B cell (primary cell): ENCODE measurements at regions of chr12 and their contacts with region 1.

Region 1: GRCh38 chr12:47032644-47033043 is 46.8 kb upstream of the PCED1B start:
- DNase-seq: peak; percentile 78
- ATAC-seq: peak; percentile 81
- H3K4me3 ChIP-seq: no peak overlapping the region
- H3K4me3 Mint-ChIP-seq: no peak overlapping the region
- H3K27ac ChIP-seq: no peak overlapping the region
- H3K27ac Mint-ChIP-seq: no peak overlapping the region
- H3K4me1 ChIP-seq: peaks cover 0 to 3% of the 10 kb centered on the region in 2 donors
- H3K4me1 Mint-ChIP-seq: peaks cover 8% of the 10 kb centered on the region
- H3K27me3 ChIP-seq: no peaks in the 10 kb centered on the region
- H3K27me3 Mint-ChIP-seq: no peaks in the 10 kb centered on the region
- CTCF ChIP-seq: peak; percentile 77

Region 2: GRCh38 chr12:46874642-46875041 is 158.0 kb before region 1 on chr12:
- CTCF ChIA-PET with region 1: no interaction called
- POLR2A ChIA-PET with region 1: no interaction called
- intact Hi-C with region 1: no loop called
- DNase-seq: no peak
- ATAC-seq: no peak
- H3K4me3 ChIP-seq: no peak overlapping the region
- H3K4me3 Mint-ChIP-seq: no peak overlapping the region
- H3K27ac ChIP-seq: no peak overlapping the region
- H3K27ac Mint-ChIP-seq: no peak overlapping the region
- H3K4me1 ChIP-seq: no peaks in the 10 kb centered on the region
- H3K4me1 Mint-ChIP-seq: no peaks in the 10 kb centered on the region
- H3K27me3 ChIP-seq: peaks cover 0 to 3% (median 0%) of the 10 kb centered on the region in 4 experiments
- H3K27me3 Mint-ChIP-seq: peaks cover 37% of the 10 kb centered on the region
- CTCF ChIP-seq: no peak

Region 3: DNA sequence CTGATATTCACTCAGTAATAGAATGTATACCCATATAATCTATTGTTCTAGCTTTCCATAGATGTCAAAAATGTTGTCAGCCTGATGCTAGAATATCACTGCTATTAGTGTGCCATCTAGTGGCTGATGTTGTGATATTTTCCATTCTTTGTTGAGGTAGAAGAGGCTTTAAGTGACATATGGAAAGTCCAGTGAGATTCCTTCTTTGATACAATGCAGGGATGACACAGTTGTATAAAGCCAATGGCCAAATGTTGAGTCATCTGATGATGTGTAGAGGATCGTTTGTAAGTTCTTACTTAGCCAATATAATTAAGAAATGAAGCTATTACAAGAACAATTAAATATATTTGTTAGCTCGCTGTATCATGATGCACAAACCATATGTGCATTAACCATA is 11.3 kb before region 1 on chr12:
- CTCF ChIA-PET with region 1: interaction called, 19 read pairs
- POLR2A ChIA-PET with region 1: no interaction called
- intact Hi-C with region 1: no loop called
- DNase-seq: peak; percentile 70
- ATAC-seq: peak; percentile 28
- H3K4me3 ChIP-seq: no peak overlapping the region
- H3K4me3 Mint-ChIP-seq: no peak overlapping the region
- H3K27ac ChIP-seq: no peak overlapping the region
- H3K27ac Mint-ChIP-seq: no peak overlapping the region
- H3K4me1 ChIP-seq: no peaks in the 10 kb centered on the region
- H3K4me1 Mint-ChIP-seq: no peaks in the 10 kb centered on the region
- H3K27me3 ChIP-seq: peaks cover 0 to 3% (median under 1%) of the 10 kb centered on the region in 4 experiments
- H3K27me3 Mint-ChIP-seq: peaks cover 9% of the 10 kb centered on the region
- CTCF ChIP-seq: peak; percentile 88

Region 4: GRCh38 chr12:47207340-47207717 is 174.7 kb after region 1 on chr12:
- CTCF ChIA-PET with region 1: interaction called, 11 read pairs
- POLR2A ChIA-PET with region 1: no interaction called
- intact Hi-C with region 1: no loop called
- DNase-seq: peak; percentile 87
- ATAC-seq: peak; percentile 85
- H3K4me3 ChIP-seq: peak overlapping the region in 2 of 5 experiments; percentile 7 to 31
- H3K4me3 Mint-ChIP-seq: peak overlapping the region; percentile 75
- H3K27ac ChIP-seq: peak overlapping the region; percentile 78 to 84
- H3K27ac Mint-ChIP-seq: peak overlapping the region; percentile 94
- H3K4me1 ChIP-seq: peaks cover 71 to 80% of the 10 kb centered on the region in 2 donors
- H3K4me1 Mint-ChIP-seq: peaks cover 77% of the 10 kb centered on the region
- H3K27me3 ChIP-seq: no peaks in the 10 kb centered on the region
- H3K27me3 Mint-ChIP-seq: no peaks in the 10 kb centered on the region
- CTCF ChIP-seq: no peak

Region 5: DNA sequence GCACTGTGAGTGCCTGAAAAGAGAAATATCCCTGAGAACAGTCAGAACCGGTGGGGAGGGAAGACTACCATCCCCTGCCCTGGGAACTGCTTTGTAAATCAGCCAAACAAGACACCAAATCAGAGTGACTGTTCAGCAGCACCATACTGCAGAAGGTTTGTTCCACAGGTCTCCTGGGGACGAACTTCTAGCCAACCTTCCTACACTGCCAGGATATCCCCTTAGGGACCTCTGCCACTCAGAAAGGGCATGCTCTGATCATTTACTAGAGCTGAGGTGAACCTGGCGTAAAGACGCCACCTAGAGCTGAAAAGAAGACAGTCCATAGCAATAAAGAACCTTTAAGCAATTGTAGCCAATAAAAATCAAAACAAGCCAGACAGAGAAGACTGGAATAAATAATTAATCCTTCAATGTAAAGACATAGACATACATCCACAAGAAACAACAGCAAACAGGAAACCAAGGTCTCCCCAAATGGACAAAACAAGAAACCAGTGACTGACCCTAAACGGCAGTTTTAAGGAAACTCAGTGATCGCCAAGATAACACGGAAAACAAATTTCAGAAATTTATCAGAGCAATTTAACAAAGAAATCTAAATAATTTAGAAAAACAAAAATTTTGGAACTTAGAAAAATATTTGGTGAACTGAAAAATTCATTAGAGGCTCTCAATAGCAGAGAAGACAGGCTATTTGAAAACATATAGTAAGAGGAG is 275.2 kb after region 1 on chr12:
- CTCF ChIA-PET with region 1: interaction called, 62 read pairs
- POLR2A ChIA-PET with region 1: no interaction called
- intact Hi-C with region 1: loop called (anchors 1 kb)
- DNase-seq: peak; percentile 84
- ATAC-seq: peak; percentile 84
- H3K4me3 ChIP-seq: peak overlapping the region; percentile 64 to 90 (median 73)
- H3K4me3 Mint-ChIP-seq: peak overlapping the region; percentile 94
- H3K27ac ChIP-seq: peak overlapping the region; percentile 73 to 74
- H3K27ac Mint-ChIP-seq: peak overlapping the region; percentile 90
- H3K4me1 ChIP-seq: peaks cover 10 to 29% of the 10 kb centered on the region in 2 donors
- H3K4me1 Mint-ChIP-seq: peaks cover 53% of the 10 kb centered on the region
- H3K27me3 ChIP-seq: no peaks in the 10 kb centered on the region
- H3K27me3 Mint-ChIP-seq: no peaks in the 10 kb centered on the region
- CTCF ChIP-seq: peak; percentile 76

Region 6: DNA sequence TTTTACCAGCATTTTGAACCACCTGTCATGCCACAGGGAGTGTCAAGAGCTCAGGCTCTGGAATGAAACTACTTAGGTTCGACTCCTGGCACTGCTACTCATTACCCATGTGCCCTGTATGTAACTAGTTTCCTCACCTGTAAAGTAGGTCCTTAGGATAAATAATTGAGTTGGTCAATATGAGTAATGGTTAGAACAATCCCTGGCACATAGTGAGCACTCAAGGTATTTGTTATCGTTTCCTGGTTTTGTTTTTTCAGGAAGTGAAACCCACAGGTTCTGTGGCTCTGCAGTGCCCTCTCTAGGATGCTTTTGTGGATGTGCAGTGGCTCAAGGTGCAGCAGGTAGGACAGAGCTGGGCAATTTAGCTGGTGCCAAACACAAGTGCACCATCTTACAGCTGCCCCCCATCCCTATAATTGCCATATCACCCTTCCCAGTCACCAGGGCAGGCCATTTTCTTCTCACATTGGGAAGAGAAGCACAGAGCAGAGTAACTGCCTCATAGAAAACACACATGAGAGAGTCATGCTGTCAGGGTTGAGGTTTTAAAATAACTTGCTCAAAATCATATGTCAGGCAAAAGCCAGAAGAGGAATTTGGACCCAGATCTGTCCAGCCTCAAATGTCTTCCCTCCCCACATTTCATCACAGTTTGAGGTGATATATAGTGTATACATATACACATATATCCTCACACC is 375.7 kb after region 1 on chr12:
- CTCF ChIA-PET with region 1: interaction called, 124 read pairs
- POLR2A ChIA-PET with region 1: no interaction called
- intact Hi-C with region 1: loop called (anchors 1 kb)
- DNase-seq: peak; percentile 87
- ATAC-seq: peak; percentile 98
- H3K4me3 ChIP-seq: no peak overlapping the region
- H3K4me3 Mint-ChIP-seq: no peak overlapping the region
- H3K27ac ChIP-seq: peak overlapping the region; percentile 41 to 55
- H3K27ac Mint-ChIP-seq: peak overlapping the region; percentile 73
- H3K4me1 ChIP-seq: peaks cover 18 to 19% of the 10 kb centered on the region in 2 donors
- H3K4me1 Mint-ChIP-seq: peaks cover 21% of the 10 kb centered on the region
- H3K27me3 ChIP-seq: no peaks in the 10 kb centered on the region
- H3K27me3 Mint-ChIP-seq: no peaks in the 10 kb centered on the region
- CTCF ChIP-seq: peak; percentile 83

Region 7: GRCh38 chr12:47686645-47687240 is 654.1 kb after region 1 on chr12:
- CTCF ChIA-PET with region 1: interaction called, 28 read pairs
- POLR2A ChIA-PET with region 1: no interaction called
- intact Hi-C with region 1: loop called (anchors 2 kb)
- DNase-seq: peak; percentile 39
- ATAC-seq: no peak
- H3K4me3 ChIP-seq: no peak overlapping the region
- H3K4me3 Mint-ChIP-seq: no peak overlapping the region
- H3K27ac ChIP-seq: no peak overlapping the region
- H3K27ac Mint-ChIP-seq: no peak overlapping the region
- H3K4me1 ChIP-seq: no peaks in the 10 kb centered on the region
- H3K4me1 Mint-ChIP-seq: peaks cover 4% of the 10 kb centered on the region
- H3K27me3 ChIP-seq: no peaks in the 10 kb centered on the region
- H3K27me3 Mint-ChIP-seq: no peaks in the 10 kb centered on the region
- CTCF ChIP-seq: peak; percentile 72